ENCODE measurements at regions of chr5 and their contacts with region 1.

Region 1: GRCh38 chr5:84255315-84255714 is 129.4 kb downstream of the EDIL3 start:
- DNase-seq: peak; percentile 3
- ATAC-seq: peak; percentile 51
- H3K4me3 ChIP-seq: no peak overlapping the region
- H3K27ac ChIP-seq: no peak overlapping the region
- H3K4me1 ChIP-seq: no peaks in the 10 kb centered on the region
- H3K27me3 ChIP-seq: no peaks in the 10 kb centered on the region
- CTCF ChIP-seq: peak; percentile 22; the same call in 1 of the 2 replicates
- EP300 ChIP-seq: no peak
- POLR2A ChIP-seq: no peak
- RAD21 ChIP-seq: no peak

Region 2: GRCh38 chr5:83927140-83927733 is 328.1 kb before region 1 on chr5:
- CTCF ChIA-PET with region 1: no interaction called
- POLR2A ChIA-PET with region 1: no interaction called
- in situ Hi-C with region 1: no loop called
- intact Hi-C with region 1: loop called (anchors 10 kb)
- DNase-seq: peak; percentile 41
- ATAC-seq: peak; percentile 80
- H3K4me3 ChIP-seq: no peak overlapping the region
- H3K27ac ChIP-seq: no peak overlapping the region
- H3K4me1 ChIP-seq: no peaks in the 10 kb centered on the region
- H3K27me3 ChIP-seq: no peaks in the 10 kb centered on the region
- CTCF ChIP-seq: peak; percentile 77
- EP300 ChIP-seq: no peak
- POLR2A ChIP-seq: no peak
- RAD21 ChIP-seq: peak; percentile 18; the same call in 1 of the 2 replicates

Region 3: DNA sequence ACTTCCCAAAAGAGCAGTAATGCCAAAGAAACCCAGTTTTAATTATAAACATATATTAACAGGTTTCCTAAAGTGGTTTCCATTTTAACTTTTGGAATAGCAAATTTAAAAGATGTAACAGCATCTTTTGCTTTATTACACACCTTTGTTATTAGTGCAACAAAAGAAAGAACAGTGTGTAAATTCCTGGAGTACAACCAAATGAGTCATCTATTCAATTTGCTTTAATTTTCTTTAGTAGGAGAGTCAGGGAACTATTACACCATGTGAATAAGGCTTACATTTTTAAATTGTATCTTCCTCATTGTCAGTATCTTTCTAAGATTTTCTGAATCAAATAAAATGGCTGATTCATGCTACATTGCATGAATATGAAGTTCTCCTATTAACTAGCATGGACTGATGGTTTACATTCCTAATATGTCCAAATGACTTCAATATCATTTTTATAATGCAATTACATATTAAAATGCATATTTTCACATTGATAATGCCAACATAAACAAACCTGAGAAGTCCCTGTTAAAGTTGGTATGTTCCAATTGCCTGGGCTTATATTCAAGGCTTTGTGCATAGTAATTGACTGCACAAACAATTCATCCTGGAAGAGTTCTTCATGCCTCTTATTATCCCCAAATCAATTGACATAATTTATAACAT is 106.9 kb after region 1 on chr5:
- CTCF ChIA-PET with region 1: no interaction called
- POLR2A ChIA-PET with region 1: no interaction called
- in situ Hi-C with region 1: no loop called
- intact Hi-C with region 1: no loop called
- DNase-seq: no peak
- ATAC-seq: no peak
- H3K4me3 ChIP-seq: no peak overlapping the region
- H3K27ac ChIP-seq: no peak overlapping the region
- H3K4me1 ChIP-seq: no peaks in the 10 kb centered on the region
- H3K27me3 ChIP-seq: no peaks in the 10 kb centered on the region
- CTCF ChIP-seq: no peak
- EP300 ChIP-seq: no peak
- POLR2A ChIP-seq: no peak
- RAD21 ChIP-seq: no peak

Region 4: DNA sequence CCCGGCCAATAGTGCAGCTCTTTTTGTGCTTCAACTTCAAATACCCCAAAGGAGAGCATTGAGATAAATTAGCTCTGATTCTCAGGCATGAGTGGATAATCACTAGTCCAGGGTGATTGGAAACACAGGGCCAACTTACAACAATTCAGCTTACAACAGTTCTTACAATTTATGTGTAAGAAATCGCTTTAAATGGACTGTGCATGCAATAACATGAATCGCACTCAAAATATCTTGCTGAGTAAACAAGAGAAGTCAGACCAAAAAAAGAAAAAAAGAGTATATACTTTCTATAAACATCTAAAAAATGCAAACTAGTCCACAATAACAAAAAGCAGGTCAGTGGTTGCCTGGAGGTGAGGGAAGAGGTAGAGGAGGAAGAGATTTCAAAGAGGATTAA is 280.0 kb after region 1 on chr5:
- CTCF ChIA-PET with region 1: no interaction called
- POLR2A ChIA-PET with region 1: no interaction called
- in situ Hi-C with region 1: no loop called
- intact Hi-C with region 1: no loop called
- DNase-seq: no peak
- ATAC-seq: no peak
- H3K4me3 ChIP-seq: no peak overlapping the region
- H3K27ac ChIP-seq: no peak overlapping the region
- H3K4me1 ChIP-seq: no peaks in the 10 kb centered on the region
- H3K27me3 ChIP-seq: no peaks in the 10 kb centered on the region
- CTCF ChIP-seq: no peak
- EP300 ChIP-seq: no peak
- POLR2A ChIP-seq: no peak
- RAD21 ChIP-seq: no peak